ENCODE measurements at regions of chr2 and their contacts with region 1.

Region 1: GRCh38 chr2:58448065-58448507 is 207.0 kb upstream of the FANCL start:
- DNase-seq: peak; percentile 60
- ATAC-seq: no peak
- H3K4me3 Mint-ChIP-seq: no peak overlapping the region
- H3K27ac Mint-ChIP-seq: no peak overlapping the region
- H3K4me1 Mint-ChIP-seq: no peaks in the 10 kb centered on the region
- H3K27me3 Mint-ChIP-seq: peaks cover 5% of the 10 kb centered on the region
- CTCF ChIP-seq: peak; percentile 22

Region 2: GRCh38 chr2:57759822-57760300 is 688.2 kb before region 1 on chr2:
- CTCF ChIA-PET with region 1: interaction called, 6 read pairs
- POLR2A ChIA-PET with region 1: no interaction called
- intact Hi-C with region 1: loop called (anchors 5 kb)
- DNase-seq: peak; percentile 79
- ATAC-seq: peak; percentile 87
- H3K4me3 Mint-ChIP-seq: no peak overlapping the region
- H3K27ac Mint-ChIP-seq: no peak overlapping the region
- H3K4me1 Mint-ChIP-seq: no peaks in the 10 kb centered on the region
- H3K27me3 Mint-ChIP-seq: peaks cover 2% of the 10 kb centered on the region
- CTCF ChIP-seq: peak; percentile 90

Region 3: DNA sequence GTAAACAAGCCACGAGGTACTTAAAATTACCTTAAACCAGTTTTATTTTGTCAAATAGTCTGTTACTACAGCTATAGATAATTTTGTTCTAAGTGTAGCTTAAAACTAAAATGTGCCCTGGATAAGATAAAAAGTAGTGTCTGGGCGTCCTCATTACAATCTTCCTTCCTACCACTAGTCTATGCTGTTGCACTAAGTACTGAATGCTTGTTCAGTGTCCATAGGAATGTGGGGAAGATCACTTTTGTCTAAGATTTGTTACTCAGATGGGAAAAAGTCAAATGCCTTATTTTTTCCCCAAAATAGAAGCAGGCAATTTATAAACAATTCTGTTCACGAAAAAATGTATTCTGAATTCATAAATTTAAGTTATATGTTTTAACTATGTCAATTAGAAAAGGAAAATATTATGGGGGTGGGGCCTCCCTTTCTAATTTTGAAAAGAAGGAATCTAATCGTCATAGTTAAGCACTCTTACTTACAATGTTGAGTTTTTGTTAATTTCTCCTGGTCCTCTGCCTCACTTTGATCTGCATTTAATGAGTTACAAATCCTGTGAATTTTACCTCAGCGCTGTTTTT is 541.8 kb before region 1 on chr2:
- CTCF ChIA-PET with region 1: interaction called, 4 read pairs
- POLR2A ChIA-PET with region 1: no interaction called
- intact Hi-C with region 1: loop called (anchors 1 kb)
- DNase-seq: no peak
- ATAC-seq: peak; percentile 72
- H3K4me3 Mint-ChIP-seq: no peak overlapping the region
- H3K27ac Mint-ChIP-seq: no peak overlapping the region
- H3K4me1 Mint-ChIP-seq: peaks cover 16% of the 10 kb centered on the region
- H3K27me3 Mint-ChIP-seq: no peaks in the 10 kb centered on the region
- CTCF ChIP-seq: peak; percentile 74

Region 4: DNA sequence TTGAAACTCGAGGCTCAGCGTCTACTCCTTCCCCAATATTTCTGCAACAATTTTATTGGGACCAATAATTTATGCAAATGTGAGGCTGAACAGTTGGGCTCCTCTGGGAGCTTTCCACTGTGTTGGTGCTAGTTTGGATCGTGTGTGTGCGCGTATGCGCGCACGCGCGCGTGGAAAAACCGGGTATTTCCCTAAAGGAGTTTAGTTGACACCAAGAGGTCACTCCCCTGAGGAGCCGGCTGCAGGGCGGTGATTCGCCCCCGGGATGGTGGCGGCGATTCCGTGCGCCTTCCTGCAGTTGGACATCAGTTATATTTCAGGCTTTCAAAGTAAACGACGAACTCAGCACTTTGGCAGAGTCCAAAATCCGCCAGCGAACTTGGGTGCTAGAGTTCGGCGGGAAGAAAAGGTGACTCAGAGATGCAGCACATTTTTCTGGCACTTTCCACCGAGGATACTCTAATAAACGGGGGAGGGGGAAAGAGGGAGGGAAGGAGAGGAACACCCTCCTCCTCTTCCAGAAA is 20.5 kb before region 1 on chr2:
- CTCF ChIA-PET with region 1: no interaction called
- POLR2A ChIA-PET with region 1: no interaction called
- intact Hi-C with region 1: no loop called
- DNase-seq: peak; percentile 27
- ATAC-seq: no peak
- H3K4me3 Mint-ChIP-seq: peak overlapping the region; percentile 65
- H3K27ac Mint-ChIP-seq: no peak overlapping the region
- H3K4me1 Mint-ChIP-seq: peaks cover 4% of the 10 kb centered on the region
- H3K27me3 Mint-ChIP-seq: peaks cover 34% of the 10 kb centered on the region
- CTCF ChIP-seq: no peak

Region 5: GRCh38 chr2:58479535-58480140 is 31.6 kb after region 1 on chr2:
- CTCF ChIA-PET with region 1: no interaction called
- POLR2A ChIA-PET with region 1: no interaction called
- intact Hi-C with region 1: no loop called
- DNase-seq: no peak
- ATAC-seq: no peak
- H3K4me3 Mint-ChIP-seq: no peak overlapping the region
- H3K27ac Mint-ChIP-seq: no peak overlapping the region
- H3K4me1 Mint-ChIP-seq: no peaks in the 10 kb centered on the region
- H3K27me3 Mint-ChIP-seq: peaks cover 4% of the 10 kb centered on the region
- CTCF ChIP-seq: no peak

Region 6: GRCh38 chr2:59256290-59256689 is 808.2 kb after region 1 on chr2:
- CTCF ChIA-PET with region 1: no interaction called
- POLR2A ChIA-PET with region 1: no interaction called
- intact Hi-C with region 1: no loop called
- DNase-seq: no peak
- ATAC-seq: no peak
- H3K4me3 Mint-ChIP-seq: no peak overlapping the region
- H3K27ac Mint-ChIP-seq: no peak overlapping the region
- H3K4me1 Mint-ChIP-seq: no peaks in the 10 kb centered on the region
- H3K27me3 Mint-ChIP-seq: no peaks in the 10 kb centered on the region
- CTCF ChIP-seq: no peak